ENCODE measurements at regions of chr20 and their contacts with region 1.

Region 1: DNA sequence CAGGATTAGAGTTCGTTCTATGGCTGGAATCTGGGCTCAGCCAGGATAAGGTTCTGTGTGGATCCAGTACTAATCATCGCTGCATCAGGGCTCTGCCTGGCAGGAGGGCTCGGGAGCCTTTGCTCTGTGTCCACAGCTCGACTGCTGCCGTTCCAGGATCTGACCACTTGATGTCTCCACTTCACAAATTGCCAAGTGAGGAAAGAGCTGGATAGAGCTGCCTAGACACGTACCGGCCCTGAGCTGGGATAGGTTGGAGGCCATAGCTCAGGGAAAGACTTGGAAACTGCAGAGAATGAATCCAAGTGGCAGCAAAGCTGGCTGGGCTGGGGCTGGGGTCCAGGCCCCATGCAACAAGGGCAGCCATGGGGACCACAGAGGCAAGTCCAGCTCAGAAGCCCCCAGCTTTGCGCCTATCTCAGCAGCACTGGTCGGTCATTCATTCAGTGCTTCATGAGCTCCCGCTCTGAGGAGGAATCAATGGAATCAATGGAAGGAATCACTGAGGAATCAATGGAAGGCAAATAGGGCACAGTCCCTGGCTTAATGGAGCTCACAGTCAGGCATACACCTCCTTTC is 38.0 kb upstream of the TOP1 start:
- DNase-seq: peak; percentile 80
- H3K4me3 Mint-ChIP-seq: no peak overlapping the region
- H3K27ac Mint-ChIP-seq: peak overlapping the region; percentile 71
- H3K4me1 Mint-ChIP-seq: peaks cover 42% of the 10 kb centered on the region
- H3K27me3 Mint-ChIP-seq: peaks cover 2% of the 10 kb centered on the region

Region 2: GRCh38 chr20:40744072-40744817 is 246.4 kb before region 1 on chr20:
- CTCF ChIA-PET with region 1: no interaction called
- DNase-seq: no peak
- H3K4me3 Mint-ChIP-seq: no peak overlapping the region
- H3K27ac Mint-ChIP-seq: no peak overlapping the region
- H3K4me1 Mint-ChIP-seq: no peaks in the 10 kb centered on the region
- H3K27me3 Mint-ChIP-seq: peaks cover 43% of the 10 kb centered on the region

Region 3: GRCh38 chr20:41005361-41005729 is 14.7 kb after region 1 on chr20:
- CTCF ChIA-PET with region 1: interaction called, 35 read pairs
- DNase-seq: no peak
- H3K4me3 Mint-ChIP-seq: no peak overlapping the region
- H3K27ac Mint-ChIP-seq: no peak overlapping the region
- H3K4me1 Mint-ChIP-seq: peaks cover 50% of the 10 kb centered on the region
- H3K27me3 Mint-ChIP-seq: peaks cover 7% of the 10 kb centered on the region

Region 4: GRCh38 chr20:41028348-41029148 is 37.9 kb after region 1 on chr20 and contains the start of gene TOP1:
- CTCF ChIA-PET with region 1: interaction called, 19 read pairs
- DNase-seq: peak; percentile 100
- H3K4me3 Mint-ChIP-seq: peak within 1 kb of the TSS; percentile 82
- H3K27ac Mint-ChIP-seq: peak within 1 kb of the TSS; percentile 96
- H3K4me1 Mint-ChIP-seq: peaks cover 48% of the 10 kb centered on the region
- H3K27me3 Mint-ChIP-seq: peaks cover 6% of the 10 kb centered on the region

Region 5: DNA sequence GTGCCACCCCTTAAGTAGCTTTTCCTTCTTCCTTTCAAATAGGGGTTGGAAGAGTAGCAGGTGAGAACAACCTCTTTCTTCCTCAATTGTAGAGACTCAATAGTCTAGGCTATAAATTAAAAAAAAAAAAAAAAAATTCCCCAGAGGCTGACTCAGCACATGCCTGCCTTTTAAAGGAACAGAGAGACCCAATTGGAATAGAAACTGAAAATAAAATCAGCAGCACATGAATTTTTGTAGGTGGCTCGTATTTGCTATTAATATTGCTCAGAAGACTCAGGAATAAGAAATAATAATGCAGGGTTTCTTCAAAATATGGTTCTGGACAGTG is 57.3 kb after region 1 on chr20:
- CTCF ChIA-PET with region 1: interaction called, 36 read pairs
- DNase-seq: no peak
- H3K4me3 Mint-ChIP-seq: peak overlapping the region; percentile 72
- H3K27ac Mint-ChIP-seq: peak overlapping the region; percentile 93
- H3K4me1 Mint-ChIP-seq: peaks cover 85% of the 10 kb centered on the region
- H3K27me3 Mint-ChIP-seq: no peaks in the 10 kb centered on the region

Region 6: DNA sequence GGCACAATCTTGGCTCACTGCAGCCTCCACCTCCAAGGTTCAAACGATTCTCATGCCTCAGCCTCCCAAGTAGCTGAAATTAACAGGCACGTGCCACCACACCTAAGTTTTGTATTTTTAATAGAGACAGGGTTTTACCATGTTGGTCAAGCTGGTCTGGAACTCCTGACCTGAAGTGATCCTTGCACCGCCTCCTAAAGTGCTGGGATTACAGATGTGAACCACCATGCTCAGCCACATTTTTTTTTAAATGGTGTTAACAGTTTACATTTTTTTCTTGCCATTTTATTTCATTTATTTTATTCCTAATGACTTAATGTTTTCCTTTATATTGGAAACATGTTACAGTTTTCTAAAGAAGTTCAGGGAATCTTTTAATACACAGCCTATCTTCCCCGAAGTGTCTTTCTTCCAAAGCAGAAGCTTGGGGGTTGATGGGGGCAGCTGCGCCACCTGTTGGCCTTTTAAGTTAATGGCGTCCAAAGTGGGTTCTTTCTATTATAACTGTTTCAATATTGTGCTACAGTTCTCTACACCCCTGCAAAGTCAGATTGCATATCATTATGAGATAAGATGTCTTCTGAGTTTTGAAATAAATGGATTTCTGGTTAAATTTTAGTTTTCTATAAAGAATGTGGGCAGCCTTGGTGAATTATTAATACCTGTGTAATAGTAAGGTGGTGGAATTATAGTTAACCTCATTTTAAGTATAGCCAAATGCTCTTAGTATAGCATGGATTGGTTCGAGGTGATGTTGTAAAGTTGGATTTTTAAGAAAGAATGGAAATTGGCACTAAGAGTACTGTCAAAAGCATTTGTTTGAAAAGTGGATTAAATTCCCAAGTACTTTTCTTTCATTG is 104.7 kb after region 1 on chr20:
- CTCF ChIA-PET with region 1: interaction called, 234 read pairs
- DNase-seq: peak; percentile 64
- H3K4me3 Mint-ChIP-seq: no peak overlapping the region
- H3K27ac Mint-ChIP-seq: no peak overlapping the region
- H3K4me1 Mint-ChIP-seq: no peaks in the 10 kb centered on the region
- H3K27me3 Mint-ChIP-seq: no peaks in the 10 kb centered on the region

Region 7: DNA sequence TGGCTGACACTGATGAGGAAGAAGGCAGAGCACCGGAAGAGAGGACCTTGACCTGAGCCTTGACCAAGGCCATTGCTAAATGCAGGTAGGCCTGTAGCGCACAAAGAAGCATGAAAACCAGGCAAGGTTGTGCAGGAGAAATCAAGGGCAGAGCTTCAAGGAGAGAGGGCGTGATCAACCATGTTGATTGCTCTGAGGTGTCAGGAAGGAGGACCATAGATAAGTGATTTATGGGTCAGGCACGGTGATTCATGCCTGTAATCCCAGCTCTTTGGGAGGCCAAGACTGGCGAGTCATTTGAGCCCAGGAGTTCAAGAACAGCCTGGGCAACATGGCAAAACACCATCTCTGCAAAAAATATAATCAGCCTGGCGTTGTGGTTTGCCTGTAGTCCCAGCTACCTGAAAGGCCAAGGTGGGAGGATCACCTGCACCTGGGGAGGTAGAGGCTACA is 159.1 kb after region 1 on chr20:
- CTCF ChIA-PET with region 1: no interaction called
- DNase-seq: no peak
- H3K4me3 Mint-ChIP-seq: peak overlapping the region; percentile 21
- H3K27ac Mint-ChIP-seq: peak overlapping the region; percentile 85
- H3K4me1 Mint-ChIP-seq: peaks cover 98% of the 10 kb centered on the region
- H3K27me3 Mint-ChIP-seq: no peaks in the 10 kb centered on the region

Measured in activated naive CD4-positive, alpha-beta T cell treated with anti-CD3 and anti-CD28 coated beads, Interleukin-2, amount 10 ng/mL, durations not matched to agents 7 days and 5 days (primary cell).